Pancreas (tissue), 10 donors: ENCODE measurements at regions of chr4 and their contacts with region 1.

Region 1: GRCh38 chr4:153573881-153574802 is 108.0 kb downstream of the TMEM131L start:
- DNase-seq: peak in 3 of 6 donors; percentile 58 to 70 (median 64)
- ATAC-seq: peak; percentile 80 to 94 (median 90)
- H3K4me3 ChIP-seq: no peak overlapping the region
- H3K27ac ChIP-seq: peak overlapping the region in 2 of 4 donors; percentile 14 to 18
- H3K4me1 ChIP-seq: peaks cover 11 to 29% (median 14%) of the 10 kb centered on the region in 3 donors
- H3K27me3 ChIP-seq: no peaks in the 10 kb centered on the region
- CTCF ChIP-seq: peak in 3 of 4 donors; percentile 21 to 40 (median 33)

Region 2: GRCh38 chr4:153344131-153345010 is 229.8 kb before region 1 on chr4 and contains the start of gene MND1:
- intact Hi-C with region 1: loop called in 2 of 3 experiments (anchors 5 kb)
- DNase-seq: peak; percentile 78 to 94 (median 85)
- ATAC-seq: peak; percentile 94 to 97 (median 96)
- H3K4me3 ChIP-seq: peak within 1 kb of the TSS; percentile 55 to 98 (median 78)
- H3K27ac ChIP-seq: no peak within 1 kb of the TSS
- H3K4me1 ChIP-seq: peaks cover 6 to 14% (median 8%) of the 10 kb centered on the region in 3 donors
- H3K27me3 ChIP-seq: no peaks in the 10 kb centered on the region
- CTCF ChIP-seq: peak; percentile 86 to 98 (median 92)
- total RNA-seq, gene MND1: 0.25 to 0.70 (median 0.33) TPM in 4 of 6 donors, not detected in the others

Region 3: GRCh38 chr4:153432968-153433753 is 141.0 kb before region 1 on chr4:
- intact Hi-C with region 1: loop called in 1 of 3 experiments (anchors 5 kb)
- DNase-seq: peak; percentile 54 to 92 (median 81)
- ATAC-seq: peak; percentile 95 to 99 (median 98)
- H3K4me3 ChIP-seq: peak overlapping the region in 1 of 4 donors; percentile 24
- H3K27ac ChIP-seq: peak overlapping the region in 2 of 4 donors; percentile 73 to 80
- H3K4me1 ChIP-seq: peaks cover 0 to 10% (median 0%) of the 10 kb centered on the region in 3 donors
- H3K27me3 ChIP-seq: no peaks in the 10 kb centered on the region
- CTCF ChIP-seq: peak; percentile 31 to 66 (median 58)

Region 4: GRCh38 chr4:153466081-153466948 is 107.8 kb before region 1 on chr4 and contains the start of gene TMEM131L:
- intact Hi-C with region 1: loop called in 1 of 3 experiments (anchors 10 kb)
- DNase-seq: peak; percentile 80 to 87 (median 84)
- ATAC-seq: peak; percentile 72 to 83 (median 80)
- H3K4me3 ChIP-seq: peak within 1 kb of the TSS; percentile 76 to 97 (median 84)
- H3K27ac ChIP-seq: peak within 1 kb of the TSS; percentile 78 to 93 (median 89)
- H3K4me1 ChIP-seq: peaks cover 3 to 45% (median 10%) of the 10 kb centered on the region in 3 donors
- H3K27me3 ChIP-seq: no peaks in the 10 kb centered on the region
- CTCF ChIP-seq: no peak
- total RNA-seq, gene TMEM131L: 17.0 to 29.5 (median 25.0) TPM

Region 5: GRCh38 chr4:153541456-153542096 is 32.6 kb before region 1 on chr4:
- intact Hi-C with region 1: no loop called
- DNase-seq: no peak
- ATAC-seq: no peak
- H3K4me3 ChIP-seq: no peak overlapping the region
- H3K27ac ChIP-seq: no peak overlapping the region
- H3K4me1 ChIP-seq: peaks cover 13 to 31% (median 26%) of the 10 kb centered on the region in 3 donors
- H3K27me3 ChIP-seq: no peaks in the 10 kb centered on the region
- CTCF ChIP-seq: no peak